SK-N-SH (cell line): ENCODE measurements at regions of chr20 and their contacts with region 1.

Region 1: DNA sequence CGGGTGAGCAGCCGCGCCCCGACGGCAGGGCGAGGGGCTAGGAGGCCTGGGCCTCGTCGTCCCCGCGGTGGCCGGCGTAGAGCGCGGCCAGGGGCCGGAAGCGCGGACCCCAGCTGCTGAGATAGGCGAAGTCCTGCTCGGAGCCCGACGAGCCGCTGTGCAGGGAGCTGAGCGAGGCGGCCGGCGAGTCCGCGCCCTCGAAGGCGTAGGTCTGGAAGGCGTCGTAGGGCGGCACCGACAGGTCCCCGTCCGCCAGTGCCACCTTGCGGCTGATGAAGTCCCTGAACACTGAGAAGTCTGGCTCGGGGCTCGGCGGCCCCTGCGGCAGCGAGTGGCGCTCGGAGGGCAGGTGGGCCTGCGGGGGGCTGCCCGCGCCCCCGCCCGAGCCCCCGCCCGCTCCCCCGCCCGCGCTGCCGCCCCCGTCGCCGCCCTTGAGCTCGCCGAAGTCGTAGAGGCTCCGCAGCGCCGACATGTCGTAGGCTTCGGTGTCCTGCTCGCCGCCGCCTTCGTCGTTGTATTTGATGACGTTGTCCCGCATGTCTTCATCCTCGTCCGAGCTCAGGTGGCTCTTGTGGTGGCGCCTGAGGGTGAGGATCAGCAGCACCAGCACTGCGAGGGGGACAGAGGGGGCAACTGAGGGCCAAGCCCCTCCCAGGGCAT is 56.5 kb downstream of the CD40 start:
- DNase-seq: peak; percentile 95
- H3K4me3 ChIP-seq: no peak overlapping the region; a peak in 1 of 4 replicates
- H3K27ac ChIP-seq: no peak overlapping the region
- H3K4me1 ChIP-seq: peaks cover 0 to 21% of the 10 kb centered on the region in 2 experiments; a peak in 2 of 4 replicates
- H3K27me3 ChIP-seq: peaks cover 21% of the 10 kb centered on the region
- CTCF ChIP-seq: peak; percentile 44
- EP300 ChIP-seq: no peak
- RAD21 ChIP-seq: peak; percentile 72

Region 2: GRCh38 chr20:46151936-46152335 is 22.7 kb before region 1 on chr20:
- CTCF ChIA-PET with region 1: interaction called, 81 read pairs
- POLR2A ChIA-PET with region 1: no interaction called
- DNase-seq: peak; percentile 67
- H3K4me3 ChIP-seq: no peak overlapping the region; a peak in 1 of 4 replicates
- H3K27ac ChIP-seq: no peak overlapping the region
- H3K4me1 ChIP-seq: peaks cover 0 to 49% of the 10 kb centered on the region in 2 experiments; a peak in 2 of 4 replicates
- H3K27me3 ChIP-seq: no peaks in the 10 kb centered on the region; the same call in 1 of the 2 replicates
- CTCF ChIP-seq: peak; percentile 56
- EP300 ChIP-seq: no peak
- RAD21 ChIP-seq: no peak

Region 3: DNA sequence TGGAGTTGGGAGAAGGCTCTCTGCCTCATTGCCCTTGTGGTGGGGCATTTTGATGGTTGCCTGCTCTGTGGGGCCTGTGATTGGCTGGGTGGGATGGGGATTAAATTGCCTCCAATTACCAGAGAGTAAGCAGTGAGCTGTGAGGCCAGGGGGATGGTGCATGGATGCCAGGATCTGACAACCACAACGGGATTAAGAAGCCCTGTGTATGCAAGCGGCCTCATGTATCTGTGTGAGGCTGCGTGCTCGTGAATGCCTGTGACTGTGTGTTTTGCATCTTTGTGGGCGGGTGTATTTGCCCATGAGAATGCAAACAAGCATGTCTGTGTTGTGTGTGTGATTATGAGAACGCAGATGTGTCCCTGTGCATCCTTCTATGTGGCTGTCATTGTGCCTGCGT is 10.3 kb before region 1 on chr20:
- CTCF ChIA-PET with region 1: interaction called, 46 read pairs
- POLR2A ChIA-PET with region 1: no interaction called
- DNase-seq: no peak
- H3K4me3 ChIP-seq: no peak overlapping the region
- H3K27ac ChIP-seq: no peak overlapping the region
- H3K4me1 ChIP-seq: peaks cover 0 to 29% of the 10 kb centered on the region in 2 experiments; a peak in 2 of 4 replicates
- H3K27me3 ChIP-seq: no peaks in the 10 kb centered on the region
- CTCF ChIP-seq: no peak
- EP300 ChIP-seq: no peak
- RAD21 ChIP-seq: no peak

Region 4: DNA sequence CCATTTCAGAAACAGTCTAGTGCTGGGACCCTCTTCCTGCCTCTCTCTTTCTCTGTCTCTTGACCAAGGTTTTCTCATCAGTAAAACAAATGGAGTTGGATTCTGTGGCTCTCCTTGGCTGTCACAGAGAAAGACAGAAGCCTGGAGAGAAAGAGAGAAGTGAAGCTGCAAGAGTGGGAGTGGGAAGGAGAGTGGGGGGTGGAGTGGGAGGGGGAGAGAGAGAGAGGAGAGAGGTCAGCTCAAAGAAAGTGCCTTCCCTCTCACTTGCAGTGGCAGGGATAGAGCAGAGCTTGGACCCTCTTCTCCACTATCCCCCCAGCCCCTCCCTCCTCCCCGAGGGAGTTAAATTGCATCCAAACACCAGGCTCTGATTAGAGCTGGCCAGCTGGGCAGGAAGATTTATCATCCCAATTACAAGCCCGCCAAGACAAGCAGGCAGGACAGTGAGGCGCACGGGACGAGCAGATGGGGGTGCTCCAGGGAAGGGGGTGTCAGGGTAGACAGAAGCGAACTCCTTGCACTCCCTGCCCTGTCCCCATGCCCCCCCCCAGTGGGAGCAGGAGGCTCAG is 17.9 kb after region 1 on chr20:
- CTCF ChIA-PET with region 1: interaction called, 20 read pairs
- POLR2A ChIA-PET with region 1: no interaction called
- DNase-seq: peak; percentile 89
- H3K4me3 ChIP-seq: no peak overlapping the region
- H3K27ac ChIP-seq: peak overlapping the region in 1 of 2 experiments; percentile 31; a peak in 1 of 4 replicates
- H3K4me1 ChIP-seq: peaks cover 0 to 37% of the 10 kb centered on the region in 2 experiments; a peak in 1 of 4 replicates
- H3K27me3 ChIP-seq: 0 out of 2 replicates have a peak, but pooled peaks cover 4% of the 10 kb centered on the region
- CTCF ChIP-seq: no peak
- EP300 ChIP-seq: peak in 1 of 2 experiments; percentile 67; a peak in 2 of 4 replicates
- RAD21 ChIP-seq: no peak; the same call in 1 of the 2 replicates

Region 5: GRCh38 chr20:46307139-46307998 is 132.8 kb after region 1 on chr20:
- CTCF ChIA-PET with region 1: interaction called, 37 read pairs
- POLR2A ChIA-PET with region 1: no interaction called
- DNase-seq: peak; percentile 89
- H3K4me3 ChIP-seq: peak overlapping the region in 1 of 2 experiments; percentile 49; a peak in 3 of 4 replicates
- H3K27ac ChIP-seq: no peak overlapping the region
- H3K4me1 ChIP-seq: no peaks in the 10 kb centered on the region; a peak in 1 of 4 replicates
- H3K27me3 ChIP-seq: peaks cover 61% of the 10 kb centered on the region
- CTCF ChIP-seq: peak; percentile 69
- EP300 ChIP-seq: no peak
- RAD21 ChIP-seq: peak; percentile 75